ENCODE measurements at regions of chr7 and their contacts with region 1.

Region 1: DNA sequence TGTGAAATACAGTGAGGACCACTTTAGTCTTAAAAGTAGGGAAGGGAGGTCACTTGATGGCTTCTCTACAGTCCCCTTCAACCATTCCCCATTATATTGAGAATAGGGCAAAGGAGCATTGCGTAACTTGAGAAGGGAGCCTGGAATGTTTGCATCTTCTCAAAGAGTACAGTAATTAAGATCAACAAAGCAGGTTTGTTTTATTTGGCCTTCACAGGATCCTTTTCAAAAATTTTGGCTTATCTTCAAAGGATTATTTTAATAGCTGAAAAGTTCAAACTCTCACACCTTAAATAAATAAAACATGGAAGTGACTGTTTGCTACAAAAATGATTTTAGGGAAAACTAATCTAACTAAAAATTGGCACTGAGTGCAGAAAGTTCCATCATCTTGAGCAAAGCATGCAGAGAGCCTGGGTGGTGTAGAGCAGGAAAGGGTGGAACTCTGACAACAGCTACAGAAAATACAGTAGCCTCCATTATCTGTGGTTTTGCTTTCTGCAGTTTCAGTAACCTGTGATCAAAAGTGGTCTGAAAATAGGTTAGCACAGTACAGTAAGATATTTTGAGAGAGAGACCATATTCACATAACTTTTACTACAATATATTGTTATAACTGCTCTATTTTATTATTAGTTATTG is 214.0 kb downstream of the MDFIC start:
- DNase-seq: peak; percentile 44
- ATAC-seq: peak; percentile 79
- H3K4me3 ChIP-seq: no peak overlapping the region
- H3K27ac ChIP-seq: no peak overlapping the region
- H3K4me1 ChIP-seq: peaks cover 21% of the 10 kb centered on the region
- H3K27me3 ChIP-seq: no peaks in the 10 kb centered on the region
- CTCF ChIP-seq: no peak
- EP300 ChIP-seq: peak in 1 of 2 experiments; percentile 48; a peak in 1 of 4 replicates
- POLR2A ChIP-seq: no peak
- RAD21 ChIP-seq: no peak

Region 2: DNA sequence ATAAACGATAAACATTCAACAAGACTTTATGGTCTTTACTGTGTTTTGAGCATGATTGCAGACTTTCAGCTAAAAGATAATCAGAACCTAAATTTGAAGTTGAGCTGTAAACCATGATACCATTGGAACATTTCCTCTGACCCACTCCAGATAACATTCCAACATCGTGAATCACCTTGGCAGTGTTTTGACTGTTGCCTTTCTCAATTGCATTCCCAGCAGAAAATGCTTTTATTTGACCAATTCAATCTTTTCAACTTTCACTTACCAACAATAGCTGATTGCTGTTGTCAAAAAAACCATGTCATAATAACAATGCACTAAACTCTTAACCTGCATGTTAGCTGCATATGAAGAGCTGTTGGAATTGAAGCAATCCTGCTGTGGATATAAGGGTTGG is 48.5 kb before region 1 on chr7:
- CTCF ChIA-PET with region 1: no interaction called
- POLR2A ChIA-PET with region 1: no interaction called
- in situ Hi-C with region 1: no loop called
- intact Hi-C with region 1: loop called (anchors 10 kb)
- DNase-seq: peak; percentile 31
- ATAC-seq: no peak
- H3K4me3 ChIP-seq: no peak overlapping the region
- H3K27ac ChIP-seq: no peak overlapping the region
- H3K4me1 ChIP-seq: peaks cover 17% of the 10 kb centered on the region
- H3K27me3 ChIP-seq: no peaks in the 10 kb centered on the region
- CTCF ChIP-seq: no peak
- EP300 ChIP-seq: no peak
- POLR2A ChIP-seq: no peak
- RAD21 ChIP-seq: no peak

Measured in HepG2 (cell line).